PC-3 (cell line): ENCODE measurements at regions of chr7 and their contacts with region 1.

Region 1: GRCh38 chr7:23334482-23335056 is 35.4 kb downstream of the MALSU1 start:
- DNase-seq: peak; percentile 99
- ATAC-seq: peak; percentile 76
- H3K4me3 ChIP-seq: peak overlapping the region; percentile 26; the same call in 1 of the 2 replicates
- H3K27ac ChIP-seq: peak overlapping the region; percentile 98
- H3K4me1 ChIP-seq: peaks cover 45% of the 10 kb centered on the region
- H3K27me3 ChIP-seq: no peaks in the 10 kb centered on the region
- CTCF ChIP-seq: no peak

Region 2: GRCh38 chr7:21850531-21851285 is 1483.9 kb before region 1 on chr7:
- CTCF ChIA-PET with region 1: no interaction called
- POLR2A ChIA-PET with region 1: interaction called, 11 read pairs
- intact Hi-C with region 1: no loop called
- DNase-seq: peak; percentile 27
- ATAC-seq: no peak; the same call in 1 of the 2 replicates
- H3K4me3 ChIP-seq: no peak overlapping the region
- H3K27ac ChIP-seq: no peak overlapping the region
- H3K4me1 ChIP-seq: no peaks in the 10 kb centered on the region
- H3K27me3 ChIP-seq: peaks cover 9% of the 10 kb centered on the region; the same call in 1 of the 2 replicates
- CTCF ChIP-seq: no peak

Region 3: GRCh38 chr7:23298885-23299769 is 35.4 kb before region 1 on chr7 and contains the start of gene MALSU1:
- CTCF ChIA-PET with region 1: no interaction called
- POLR2A ChIA-PET with region 1: interaction called, 6 read pairs
- intact Hi-C with region 1: loop called (anchors 5 kb)
- DNase-seq: peak; percentile 96
- ATAC-seq: peak; percentile 99
- H3K4me3 ChIP-seq: peak within 1 kb of the TSS; percentile 97
- H3K27ac ChIP-seq: peak within 1 kb of the TSS; percentile 50
- H3K4me1 ChIP-seq: peaks cover 22% of the 10 kb centered on the region
- H3K27me3 ChIP-seq: no peaks in the 10 kb centered on the region
- CTCF ChIP-seq: no peak
- total RNA-seq, gene MALSU1: 284 and 306 TPM in 2 replicates

Region 4: DNA sequence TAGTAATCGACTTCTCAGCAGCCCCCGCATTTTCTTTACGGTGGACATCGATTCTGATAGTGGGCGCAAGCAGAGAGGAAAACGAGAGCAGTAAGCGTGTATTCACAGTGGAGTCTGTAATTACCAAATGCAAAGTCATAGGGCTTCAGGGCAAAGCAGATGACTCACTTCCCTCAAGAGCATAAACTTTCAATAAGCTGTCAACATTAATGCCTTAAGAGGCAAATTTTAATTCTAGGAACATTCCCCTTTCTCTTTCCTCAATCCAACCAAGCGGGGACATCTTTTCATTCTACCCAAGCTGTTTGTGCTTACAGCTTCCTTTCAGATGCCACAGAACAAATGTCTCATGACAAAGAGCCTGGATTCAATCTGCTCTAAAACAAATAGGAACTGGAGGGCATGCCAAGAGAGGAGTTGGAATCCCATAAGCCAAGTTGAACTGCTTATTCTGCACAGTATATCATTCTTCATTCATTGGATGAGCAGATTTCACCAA is 13.2 kb after region 1 on chr7:
- CTCF ChIA-PET with region 1: no interaction called
- POLR2A ChIA-PET with region 1: interaction called, 4 read pairs
- intact Hi-C with region 1: loop called (anchors 1 kb)
- DNase-seq: peak; percentile 89
- ATAC-seq: peak; percentile 64
- H3K4me3 ChIP-seq: peak overlapping the region; percentile 62
- H3K27ac ChIP-seq: peak overlapping the region; percentile 98
- H3K4me1 ChIP-seq: peaks cover 75% of the 10 kb centered on the region
- H3K27me3 ChIP-seq: no peaks in the 10 kb centered on the region
- CTCF ChIP-seq: no peak

Region 5: GRCh38 chr7:23645822-23646221 is 311.3 kb after region 1 on chr7:
- CTCF ChIA-PET with region 1: no interaction called
- POLR2A ChIA-PET with region 1: no interaction called
- intact Hi-C with region 1: no loop called
- DNase-seq: no peak
- ATAC-seq: no peak
- H3K4me3 ChIP-seq: no peak overlapping the region
- H3K27ac ChIP-seq: no peak overlapping the region
- H3K4me1 ChIP-seq: no peaks in the 10 kb centered on the region
- H3K27me3 ChIP-seq: no peaks in the 10 kb centered on the region
- CTCF ChIP-seq: no peak